ENCODE measurements at regions of chr17 and their contacts with region 1.

Region 1: GRCh38 chr17:66165513-66166123 is 26.3 kb downstream of the CEP112 start:
- DNase-seq: no peak
- ATAC-seq: no peak

Region 2: GRCh38 chr17:65231662-65232335 is 933.8 kb before region 1 on chr17:
- intact Hi-C with region 1: loop called (anchors 2 kb)
- DNase-seq: no peak
- ATAC-seq: peak; percentile 71

Region 3: GRCh38 chr17:65294179-65294720 is 871.4 kb before region 1 on chr17:
- intact Hi-C with region 1: loop called (anchors 5 kb)
- DNase-seq: no peak
- ATAC-seq: peak; percentile 88

Region 4: GRCh38 chr17:65556014-65556909 is 609.4 kb before region 1 on chr17:
- intact Hi-C with region 1: loop called (anchors 10 kb)
- DNase-seq: peak; percentile 88
- ATAC-seq: peak; percentile 15

Region 5: DNA sequence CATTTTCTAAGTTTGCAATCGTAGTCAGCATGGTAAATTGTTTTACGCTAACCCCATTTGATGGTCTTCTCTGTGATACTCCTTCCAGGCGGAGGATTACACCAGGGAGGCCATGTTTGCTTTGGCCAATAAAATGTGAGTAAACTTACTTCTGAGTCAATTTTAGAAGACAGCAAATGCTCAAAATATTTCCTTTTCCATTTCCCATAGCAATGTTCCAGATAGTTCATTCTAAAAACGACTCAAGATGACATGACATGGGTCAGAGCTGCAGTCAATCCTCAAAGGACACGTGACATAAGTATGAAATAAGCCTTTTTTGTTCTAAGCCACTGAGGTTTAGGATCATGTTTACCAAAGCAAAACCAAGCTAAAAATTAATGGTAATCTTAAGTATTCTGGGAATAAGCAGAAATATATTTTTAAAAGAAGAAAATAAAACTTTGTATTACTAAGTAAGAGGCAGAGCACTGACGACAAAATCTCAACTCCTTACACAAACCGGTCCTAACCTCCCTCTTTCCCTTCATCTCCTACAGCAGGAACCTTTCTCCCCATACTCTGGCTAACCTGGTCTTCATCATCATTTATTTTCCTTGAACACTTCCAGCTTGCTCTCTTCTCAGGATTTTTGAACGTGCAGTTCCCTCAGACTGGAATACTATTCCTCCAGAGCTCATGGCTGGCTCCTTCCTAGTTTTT is 239.9 kb before region 1 on chr17:
- intact Hi-C with region 1: no loop called
- DNase-seq: no peak
- ATAC-seq: peak; percentile 42